MCF 10A (cell line): ENCODE measurements at regions of chr20 and their contacts with region 1.

Region 1: GRCh38 chr20:36919715-36920333 is 31.7 kb downstream of the SAMHD1 start:
- DNase-seq: peak; percentile 66
- H3K4me3 Mint-ChIP-seq: no peak overlapping the region
- H3K27ac Mint-ChIP-seq: no peak overlapping the region
- H3K4me1 Mint-ChIP-seq: no peaks in the 10 kb centered on the region
- H3K27me3 Mint-ChIP-seq: no peaks in the 10 kb centered on the region
- CTCF ChIP-seq: peak; percentile 65

Region 2: DNA sequence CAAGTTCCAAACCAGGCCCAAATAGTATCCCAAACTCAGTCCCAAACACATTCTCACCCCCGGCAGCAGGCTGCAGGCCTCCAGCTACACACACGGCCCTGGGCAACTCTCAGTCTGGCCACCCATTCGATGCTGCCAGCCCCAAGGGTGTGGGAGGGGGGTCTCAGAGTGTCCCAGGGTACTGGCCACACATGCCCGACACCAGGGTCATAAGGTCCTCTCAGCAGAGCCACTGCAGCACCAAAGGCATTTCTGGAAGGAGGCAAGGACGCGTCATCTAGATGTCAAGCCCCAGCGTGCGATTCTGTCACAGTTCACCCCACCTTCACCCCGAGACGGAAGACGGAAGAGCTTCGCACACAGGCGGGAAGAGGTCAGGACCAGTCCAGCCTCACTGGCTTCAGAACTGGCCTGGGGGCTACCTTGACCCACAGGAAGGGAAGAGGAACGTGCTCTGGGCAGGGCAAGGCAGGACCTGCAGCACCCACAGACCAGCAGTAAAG is 369.0 kb before region 1 on chr20:
- CTCF ChIA-PET with region 1: interaction called, 3 read pairs
- POLR2A ChIA-PET with region 1: no interaction called
- intact Hi-C with region 1: loop called (anchors 10 kb)
- DNase-seq: no peak
- H3K4me3 Mint-ChIP-seq: no peak overlapping the region
- H3K27ac Mint-ChIP-seq: no peak overlapping the region
- H3K4me1 Mint-ChIP-seq: no peaks in the 10 kb centered on the region
- H3K27me3 Mint-ChIP-seq: no peaks in the 10 kb centered on the region
- CTCF ChIP-seq: no peak

Region 3: GRCh38 chr20:36951198-36951976 is 31.6 kb after region 1 on chr20 and contains the start of gene SAMHD1:
- CTCF ChIA-PET with region 1: no interaction called
- POLR2A ChIA-PET with region 1: no interaction called
- intact Hi-C with region 1: no loop called
- DNase-seq: peak; percentile 95
- H3K4me3 Mint-ChIP-seq: peak within 1 kb of the TSS; percentile 87
- H3K27ac Mint-ChIP-seq: peak within 1 kb of the TSS; percentile 69
- H3K4me1 Mint-ChIP-seq: peaks cover 11% of the 10 kb centered on the region
- H3K27me3 Mint-ChIP-seq: no peaks in the 10 kb centered on the region
- CTCF ChIP-seq: no peak
- total RNA-seq, gene SAMHD1: 2.6 and 3.5 TPM in 2 replicates